PC-3 (cell line): ENCODE measurements at regions of chr19 and their contacts with region 1.

Region 1: GRCh38 chr19:6632002-6632621 is 37.8 kb downstream of the TNFSF14 start:
- DNase-seq: peak; percentile 95
- ATAC-seq: peak; percentile 63
- H3K4me3 ChIP-seq: no peak overlapping the region
- H3K27ac ChIP-seq: no peak overlapping the region
- H3K4me1 ChIP-seq: no peaks in the 10 kb centered on the region
- H3K27me3 ChIP-seq: no peaks in the 10 kb centered on the region
- CTCF ChIP-seq: peak; percentile 88

Region 2: DNA sequence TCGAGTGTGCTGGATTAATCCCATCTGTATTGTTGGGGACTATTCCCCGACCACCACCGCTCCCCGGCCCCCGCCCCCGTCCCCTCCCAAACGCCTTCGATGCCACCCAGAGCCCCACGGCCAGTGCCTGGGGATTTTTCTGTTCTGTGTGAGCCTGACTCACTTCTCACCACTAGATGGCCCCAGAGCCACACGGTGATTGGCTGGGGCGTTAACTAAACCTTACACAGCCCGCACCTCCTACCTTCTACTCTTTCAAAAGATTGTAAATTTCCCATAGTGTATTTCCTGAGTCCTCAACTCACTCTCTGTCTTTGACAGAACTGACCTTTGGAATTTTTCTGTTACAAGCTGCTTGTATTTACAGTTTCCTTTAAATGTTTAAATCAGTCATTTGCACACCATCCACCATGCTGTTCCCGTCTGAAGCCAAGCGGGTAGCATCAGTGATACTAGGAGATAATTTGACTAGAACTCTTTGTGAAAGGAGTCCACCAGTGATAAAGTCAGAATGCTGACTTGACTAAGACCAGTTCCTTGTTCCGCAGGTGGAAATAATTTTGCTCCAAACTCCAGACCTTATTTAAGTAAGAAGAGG is 583.2 kb before region 1 on chr19:
- CTCF ChIA-PET with region 1: no interaction called
- POLR2A ChIA-PET with region 1: no interaction called
- intact Hi-C with region 1: loop called (anchors 2 kb)
- DNase-seq: peak; percentile 93
- ATAC-seq: peak; percentile 98
- H3K4me3 ChIP-seq: peak overlapping the region; percentile 33
- H3K27ac ChIP-seq: no peak overlapping the region
- H3K4me1 ChIP-seq: peaks cover 9% of the 10 kb centered on the region
- H3K27me3 ChIP-seq: no peaks in the 10 kb centered on the region
- CTCF ChIP-seq: peak; percentile 91

Region 3: GRCh38 chr19:6460101-6460853 is 171.8 kb before region 1 on chr19:
- CTCF ChIA-PET with region 1: no interaction called
- POLR2A ChIA-PET with region 1: no interaction called
- intact Hi-C with region 1: loop called (anchors 1 kb)
- DNase-seq: peak; percentile 99
- ATAC-seq: peak; percentile 73
- H3K4me3 ChIP-seq: peak overlapping the region; percentile 68
- H3K27ac ChIP-seq: peak overlapping the region; percentile 8; the same call in 1 of the 2 replicates
- H3K4me1 ChIP-seq: peaks cover 14% of the 10 kb centered on the region
- H3K27me3 ChIP-seq: no peaks in the 10 kb centered on the region
- CTCF ChIP-seq: peak; percentile 71

Region 4: DNA sequence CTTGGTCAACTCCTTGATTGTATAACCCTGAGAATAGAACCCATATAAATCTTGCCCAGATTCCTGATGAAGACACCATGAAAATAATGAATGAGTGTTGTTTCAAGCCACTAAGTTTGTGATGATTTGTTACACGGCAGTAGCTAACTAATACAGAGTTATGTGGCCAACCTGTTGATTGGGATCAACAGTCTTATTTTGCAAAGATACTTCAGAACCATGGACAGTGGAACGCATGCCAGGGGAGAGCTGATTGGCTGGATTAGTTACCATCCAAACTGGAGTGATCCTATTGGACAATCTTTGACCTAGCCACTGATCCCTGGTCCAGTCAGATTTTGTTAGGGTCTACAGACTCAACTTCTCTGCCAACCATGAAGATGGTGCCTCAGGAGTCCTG is 67.7 kb before region 1 on chr19:
- CTCF ChIA-PET with region 1: interaction called, 3 read pairs
- POLR2A ChIA-PET with region 1: interaction called, 4 read pairs
- intact Hi-C with region 1: loop called (anchors 1 kb)
- DNase-seq: peak; percentile 60
- ATAC-seq: no peak
- H3K4me3 ChIP-seq: no peak overlapping the region
- H3K27ac ChIP-seq: no peak overlapping the region
- H3K4me1 ChIP-seq: no peaks in the 10 kb centered on the region
- H3K27me3 ChIP-seq: peaks cover 16% of the 10 kb centered on the region; the same call in 1 of the 2 replicates
- CTCF ChIP-seq: no peak

Region 5: DNA sequence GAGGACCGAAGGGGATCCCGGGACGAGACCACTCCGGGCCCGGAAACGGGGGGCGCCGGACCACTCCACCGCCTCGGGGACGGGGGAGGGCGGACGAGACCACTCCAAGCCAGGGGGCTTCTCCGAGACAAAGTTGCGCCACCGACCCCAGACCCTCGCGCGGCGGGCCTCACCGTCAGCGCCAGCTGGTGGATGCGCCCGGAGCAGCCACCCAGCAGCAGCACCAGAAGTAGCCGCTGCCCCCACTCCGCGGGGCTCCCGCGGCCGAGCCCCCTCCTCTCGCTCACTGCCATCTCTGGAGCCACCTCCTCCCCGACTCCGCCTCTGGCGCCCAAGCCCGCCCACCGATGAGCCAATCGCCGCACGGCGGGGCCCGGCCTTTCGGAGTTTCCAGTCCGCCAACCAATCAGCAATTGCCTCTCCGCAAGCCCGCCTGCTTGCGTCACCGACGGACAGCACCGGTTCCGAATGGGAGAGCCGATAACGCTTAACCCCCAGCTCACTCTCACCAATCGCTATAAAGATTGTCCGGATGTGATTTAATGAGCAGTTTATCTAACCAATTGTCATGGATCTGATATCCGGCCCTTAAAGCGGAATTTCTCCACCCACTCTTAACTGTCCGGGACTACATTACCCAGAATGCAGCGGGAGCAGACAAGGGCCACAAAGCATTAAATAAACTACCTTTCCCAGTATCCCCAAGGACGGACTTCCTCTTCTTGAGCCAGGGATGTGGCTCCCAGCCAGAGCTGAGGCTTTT is 105.4 kb after region 1 on chr19 and contains the start of gene GPR108:
- CTCF ChIA-PET with region 1: no interaction called
- POLR2A ChIA-PET with region 1: no interaction called
- intact Hi-C with region 1: loop called (anchors 1 kb)
- DNase-seq: peak; percentile 100
- ATAC-seq: peak; percentile 65
- H3K4me3 ChIP-seq: peak within 1 kb of the TSS; percentile 83
- H3K27ac ChIP-seq: peak within 1 kb of the TSS; percentile 50
- H3K4me1 ChIP-seq: peaks cover 28% of the 10 kb centered on the region
- H3K27me3 ChIP-seq: no peaks in the 10 kb centered on the region
- CTCF ChIP-seq: no peak
- total RNA-seq, gene GPR108: 59.0 and 78.7 TPM in 2 replicates